Activated CD8-positive, alpha-beta memory T cell treated with anti-CD3 and anti-CD28 coated beads, Interleukin-2, amount 10 ng/mL, durations not matched to agents 7 days and 5 days (primary cell): ENCODE measurements at regions of chr3 and their contacts with region 1.

Region 1: DNA sequence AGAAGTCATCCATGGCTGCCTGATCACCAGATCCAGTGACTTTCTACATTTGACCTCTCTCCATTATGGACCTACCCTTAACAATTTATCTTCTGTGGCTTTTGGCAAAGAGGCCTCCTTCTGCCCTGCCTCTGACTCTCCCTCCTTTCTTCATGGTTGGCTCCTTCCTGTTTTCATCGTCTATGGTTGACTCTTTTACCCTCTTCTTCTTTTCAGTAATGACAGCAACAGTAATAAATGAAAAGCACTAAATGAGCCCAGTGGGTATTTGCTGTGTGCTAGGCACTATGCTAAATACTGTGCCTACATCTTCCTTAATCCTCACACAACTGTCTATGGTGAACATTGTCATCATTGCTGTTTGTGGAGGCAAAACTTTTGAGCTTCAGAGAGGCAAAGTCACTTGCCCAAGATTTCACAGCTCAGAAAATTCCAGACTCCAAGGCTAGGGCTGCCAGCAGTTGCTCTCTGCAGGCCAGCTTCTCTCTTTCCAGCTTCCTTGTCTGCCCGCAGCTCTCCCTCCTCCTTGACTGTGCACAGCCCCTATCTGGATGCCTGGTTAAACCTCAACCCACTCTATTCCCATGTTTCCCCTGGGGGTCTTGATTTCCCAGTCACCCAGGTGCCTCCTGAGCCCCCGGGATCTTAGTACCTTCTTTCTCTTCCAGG is 24.6 kb downstream of the ITPR1 start:
- DNase-seq: no peak
- ATAC-seq: peak; percentile 32
- H3K4me3 Mint-ChIP-seq: no peak overlapping the region
- H3K27ac Mint-ChIP-seq: peak overlapping the region; percentile 66
- H3K4me1 Mint-ChIP-seq: peaks cover 32% of the 10 kb centered on the region
- H3K27me3 Mint-ChIP-seq: no peaks in the 10 kb centered on the region

Region 2: GRCh38 chr3:3821777-3822176 is 696.0 kb before region 1 on chr3:
- CTCF ChIA-PET with region 1: no interaction called
- DNase-seq: no peak
- ATAC-seq: no peak
- H3K4me3 Mint-ChIP-seq: no peak overlapping the region
- H3K27ac Mint-ChIP-seq: no peak overlapping the region
- H3K4me1 Mint-ChIP-seq: no peaks in the 10 kb centered on the region
- H3K27me3 Mint-ChIP-seq: no peaks in the 10 kb centered on the region

Region 3: GRCh38 chr3:4322635-4323034 is 195.1 kb before region 1 on chr3:
- CTCF ChIA-PET with region 1: no interaction called
- DNase-seq: no peak
- ATAC-seq: no peak
- H3K4me3 Mint-ChIP-seq: no peak overlapping the region
- H3K27ac Mint-ChIP-seq: no peak overlapping the region
- H3K4me1 Mint-ChIP-seq: no peaks in the 10 kb centered on the region
- H3K27me3 Mint-ChIP-seq: no peaks in the 10 kb centered on the region

Region 4: GRCh38 chr3:4493014-4493940 is 24.5 kb before region 1 on chr3 and contains the start of gene ITPR1:
- CTCF ChIA-PET with region 1: interaction called, 15 read pairs
- DNase-seq: peak; percentile 99
- ATAC-seq: peak; percentile 89
- H3K4me3 Mint-ChIP-seq: peak within 1 kb of the TSS; percentile 92
- H3K27ac Mint-ChIP-seq: peak within 1 kb of the TSS; percentile 86
- H3K4me1 Mint-ChIP-seq: peaks cover 43% of the 10 kb centered on the region
- H3K27me3 Mint-ChIP-seq: peaks cover 9% of the 10 kb centered on the region
- total RNA-seq, gene ITPR1: 109 to 116 TPM

Region 5: GRCh38 chr3:4504340-4505261 is 13.2 kb before region 1 on chr3:
- CTCF ChIA-PET with region 1: interaction called, 64 read pairs
- DNase-seq: no peak
- ATAC-seq: peak; percentile 77
- H3K4me3 Mint-ChIP-seq: peak overlapping the region; percentile 77
- H3K27ac Mint-ChIP-seq: peak overlapping the region; percentile 98
- H3K4me1 Mint-ChIP-seq: peaks cover 58% of the 10 kb centered on the region
- H3K27me3 Mint-ChIP-seq: no peaks in the 10 kb centered on the region

Region 6: DNA sequence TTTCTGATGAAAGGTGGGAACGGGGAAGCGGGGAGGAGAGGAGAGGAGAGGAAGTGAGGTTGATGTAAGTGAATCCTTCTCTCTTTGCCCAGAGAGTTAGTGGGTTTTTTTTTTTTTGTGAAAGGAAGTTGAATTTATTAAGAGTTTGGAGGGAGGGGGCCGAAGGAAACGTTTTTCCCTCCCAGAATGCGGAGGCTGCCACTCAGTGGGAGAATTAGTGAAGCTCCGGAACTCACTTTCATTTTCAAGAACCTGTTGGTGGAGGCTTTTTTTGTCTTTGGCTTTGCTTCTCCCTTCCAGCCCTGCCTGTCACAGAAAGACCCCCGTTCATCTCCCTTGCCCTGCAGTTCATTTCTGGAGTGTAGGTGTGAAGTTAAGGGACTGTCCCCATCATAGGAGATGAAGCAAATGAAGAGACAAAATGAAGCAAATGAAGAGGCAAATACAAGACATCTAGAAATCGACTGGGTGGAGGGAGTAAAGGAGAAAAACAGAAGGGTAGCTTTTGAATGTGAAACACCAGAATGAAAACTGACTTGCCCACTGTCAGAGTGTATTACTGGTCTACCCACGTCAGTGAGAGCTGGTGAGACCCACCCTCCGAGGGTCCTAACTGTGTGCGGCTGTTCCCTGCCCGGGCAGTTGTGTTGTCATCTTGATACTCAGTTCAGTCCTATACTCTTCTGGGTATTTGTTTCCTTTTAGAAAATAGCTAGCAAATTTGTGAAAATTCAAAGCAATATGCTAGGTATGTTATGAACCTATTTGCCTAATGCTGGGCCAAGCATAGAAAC is 66.9 kb after region 1 on chr3:
- CTCF ChIA-PET with region 1: interaction called, 10 read pairs
- DNase-seq: peak; percentile 45
- ATAC-seq: peak; percentile 45
- H3K4me3 Mint-ChIP-seq: peak overlapping the region; percentile 72
- H3K27ac Mint-ChIP-seq: peak overlapping the region; percentile 81
- H3K4me1 Mint-ChIP-seq: peaks cover 66% of the 10 kb centered on the region
- H3K27me3 Mint-ChIP-seq: no peaks in the 10 kb centered on the region

Region 7: GRCh38 chr3:4633078-4634004 is 115.6 kb after region 1 on chr3:
- CTCF ChIA-PET with region 1: interaction called, 42 read pairs
- DNase-seq: no peak
- ATAC-seq: peak; percentile 76
- H3K4me3 Mint-ChIP-seq: no peak overlapping the region
- H3K27ac Mint-ChIP-seq: peak overlapping the region; percentile 55
- H3K4me1 Mint-ChIP-seq: peaks cover 7% of the 10 kb centered on the region
- H3K27me3 Mint-ChIP-seq: no peaks in the 10 kb centered on the region